Activated CD4-positive, alpha-beta memory T cell treated with anti-CD3 and anti-CD28 coated beads for 36 hours (primary cell): ENCODE measurements at regions of chr14 and their contacts with region 1.

Region 1: GRCh38 chr14:21346549-21347135 is 37.2 kb downstream of the SUPT16H start:
- DNase-seq: no peak
- H3K4me3 Mint-ChIP-seq: no peak overlapping the region
- H3K27ac Mint-ChIP-seq: no peak overlapping the region
- H3K4me1 Mint-ChIP-seq: peaks cover 4% of the 10 kb centered on the region
- H3K27me3 Mint-ChIP-seq: no peaks in the 10 kb centered on the region

Region 2: DNA sequence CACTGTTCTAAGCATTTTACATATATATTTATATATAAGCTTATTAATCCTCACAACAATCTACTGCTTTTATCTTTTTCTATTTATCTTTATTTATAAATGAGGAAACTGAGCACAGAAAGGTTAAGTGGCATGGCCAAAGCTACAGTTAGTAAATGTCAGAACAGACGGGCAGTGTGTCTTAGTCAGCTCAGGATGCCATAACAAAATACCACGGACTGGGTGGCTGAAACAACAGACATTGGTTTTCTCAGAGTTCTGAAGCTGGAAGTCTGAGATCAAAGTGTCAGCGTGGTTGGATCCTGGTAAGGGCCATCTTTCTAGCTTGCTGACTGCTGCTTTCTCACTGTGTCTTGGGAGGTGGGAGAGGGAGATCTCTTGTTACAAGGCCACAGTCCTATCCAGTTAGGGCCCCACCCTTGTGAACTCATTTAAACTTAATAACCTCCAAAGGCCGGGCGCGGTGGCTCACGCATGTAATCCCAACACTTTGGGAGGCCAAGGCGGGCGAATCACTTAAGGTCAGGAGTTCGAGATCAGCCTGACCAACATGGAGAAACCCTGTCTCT is 47.0 kb before region 1 on chr14:
- CTCF ChIA-PET with region 1: no interaction called
- POLR2A ChIA-PET with region 1: no interaction called
- intact Hi-C with region 1: loop called (anchors 10 kb)
- DNase-seq: no peak
- H3K4me3 Mint-ChIP-seq: no peak overlapping the region
- H3K27ac Mint-ChIP-seq: no peak overlapping the region
- H3K4me1 Mint-ChIP-seq: no peaks in the 10 kb centered on the region
- H3K27me3 Mint-ChIP-seq: peaks cover 13% of the 10 kb centered on the region